ENCODE measurements at regions of chr15 and their contacts with region 1.

Region 1: GRCh38 chr15:74179341-74179841 is 5.9 kb downstream of the ISLR start:
- DNase-seq: peak; percentile 78 to 83
- ATAC-seq: peak; percentile 68 to 94 (median 87)
- H3K4me3 ChIP-seq: peak overlapping the region in 2 of 10 donors; percentile 8 to 16
- H3K27ac ChIP-seq: peak overlapping the region; percentile 41 to 84 (median 76)
- H3K4me1 ChIP-seq: peaks cover 14 to 68% (median 46%) of the 10 kb centered on the region in 9 donors
- H3K27me3 ChIP-seq: no peaks in the 10 kb centered on the region
- CTCF ChIP-seq: no peak

Region 2: GRCh38 chr15:74134387-74135027 is 44.9 kb before region 1 on chr15:
- intact Hi-C with region 1: loop called in 4 of 10 experiments (anchors 1 to 5 kb)
- DNase-seq: peak in 1 of 2 donors; percentile 66
- ATAC-seq: peak in 1 of 8 donors; percentile 33
- H3K4me3 ChIP-seq: no peak overlapping the region
- H3K27ac ChIP-seq: peak overlapping the region in 1 of 10 donors; percentile 87
- H3K4me1 ChIP-seq: peaks cover 13 to 70% (median 55%) of the 10 kb centered on the region in 9 donors
- H3K27me3 ChIP-seq: peaks cover 0 to 92% (median 61%) of the 10 kb centered on the region in 7 donors
- CTCF ChIP-seq: peak in 8 of 9 donors; percentile 31 to 61 (median 50)

Region 3: DNA sequence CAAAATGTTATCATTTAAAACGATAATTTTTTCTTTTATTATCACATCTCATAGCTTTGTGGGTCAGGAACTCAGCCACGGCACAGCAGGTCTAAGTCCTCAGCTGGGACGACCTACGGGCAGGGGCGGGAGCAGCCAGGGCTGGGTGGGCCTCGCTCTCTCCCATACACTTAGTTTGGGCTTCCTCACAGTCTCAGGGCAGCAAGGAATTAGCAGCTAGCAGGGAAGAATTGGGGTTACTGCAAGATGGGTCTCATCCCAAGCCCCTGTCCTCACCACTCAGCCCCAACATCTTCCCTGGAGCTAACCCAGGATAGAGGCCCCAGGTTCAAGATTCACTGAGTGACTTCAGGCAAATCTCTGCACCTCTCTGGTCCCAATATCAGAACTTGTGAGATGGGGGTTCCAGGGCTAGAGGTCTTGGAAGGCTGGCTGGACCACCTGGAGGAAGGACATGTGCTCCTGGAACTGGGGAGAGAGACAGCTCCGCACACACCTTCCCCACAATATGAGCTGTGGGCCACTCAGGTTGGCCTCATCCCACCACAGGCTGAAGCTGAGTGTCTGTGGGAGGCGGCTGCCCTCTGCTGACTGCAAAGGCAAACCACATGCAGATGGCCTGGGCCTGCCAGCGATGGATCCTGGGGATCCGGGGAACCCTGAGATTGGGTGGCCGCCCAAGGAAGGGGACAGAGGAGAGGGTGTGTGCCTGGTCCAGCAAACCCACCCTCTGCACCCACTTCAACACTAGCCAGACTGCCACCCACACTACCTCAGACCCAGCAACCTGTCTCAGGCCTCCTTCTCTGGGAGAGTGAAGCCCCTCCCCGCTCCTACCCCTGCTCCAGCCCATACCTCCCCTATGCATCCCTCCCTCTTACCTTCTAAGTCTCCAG is 143.0 kb after region 1 on chr15:
- intact Hi-C with region 1: loop called in 2 of 10 experiments (anchors 5 kb)
- DNase-seq: peak; percentile 62 to 71
- ATAC-seq: peak in 7 of 8 donors; percentile 17 to 64 (median 54)
- H3K4me3 ChIP-seq: no peak overlapping the region
- H3K27ac ChIP-seq: no peak overlapping the region
- H3K4me1 ChIP-seq: peaks cover 16 to 33% (median 30%) of the 10 kb centered on the region in 9 donors
- H3K27me3 ChIP-seq: peaks cover 0 to 4% (median 0%) of the 10 kb centered on the region in 7 donors
- CTCF ChIP-seq: peak; percentile 80 to 94 (median 87)